ENCODE measurements at regions of chr3 and their contacts with region 1.

Region 1: GRCh38 chr3:59526999-59527398 is 477.2 kb upstream of the CFAP20DC start:
- DNase-seq: no peak
- ATAC-seq: no peak
- H3K4me3 ChIP-seq: no peak overlapping the region
- H3K27ac ChIP-seq: no peak overlapping the region
- H3K4me1 ChIP-seq: no peaks in the 10 kb centered on the region
- H3K27me3 ChIP-seq: no peaks in the 10 kb centered on the region
- CTCF ChIP-seq: no peak

Region 2: DNA sequence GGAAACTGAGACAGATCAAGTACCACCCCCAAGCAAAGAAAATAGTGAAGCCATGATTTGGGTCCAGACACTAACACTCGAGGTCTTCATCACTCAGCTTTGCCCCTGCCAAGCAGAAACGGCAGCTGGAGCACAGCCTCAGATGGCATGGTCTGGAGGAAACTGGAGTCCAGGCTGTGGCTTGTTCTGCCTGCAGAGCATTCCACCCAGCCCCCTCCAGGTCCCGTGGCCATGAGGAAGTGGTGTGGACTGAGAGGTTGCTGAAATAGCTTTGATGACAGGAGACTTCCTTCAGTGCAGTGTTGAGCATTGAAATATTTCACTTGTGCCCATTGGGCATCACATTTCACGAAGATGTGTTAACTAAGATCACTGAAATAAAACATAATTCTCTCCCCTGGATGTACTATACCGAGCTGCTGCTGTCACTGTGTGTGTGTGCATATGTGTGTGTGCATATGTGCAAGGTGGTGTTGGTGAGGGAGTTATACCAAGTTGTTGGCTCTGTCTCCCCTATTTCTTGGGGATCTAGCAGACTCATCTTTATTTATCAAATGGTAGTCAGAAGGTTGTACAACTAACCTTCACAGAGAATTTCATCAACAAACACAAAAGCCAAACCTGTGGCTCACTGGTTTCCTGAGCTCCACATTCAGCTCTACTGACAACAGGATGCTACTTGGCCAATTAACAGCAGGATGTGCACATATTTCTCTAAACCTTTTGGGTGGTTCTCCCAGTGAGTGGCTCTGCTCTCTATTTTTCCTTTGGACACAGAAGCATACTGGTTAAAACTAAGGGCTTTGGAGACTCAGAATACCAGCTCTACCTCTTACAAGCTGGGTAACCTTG is 182.9 kb after region 1 on chr3:
- CTCF ChIA-PET with region 1: no interaction called
- POLR2A ChIA-PET with region 1: no interaction called
- in situ Hi-C with region 1: no loop called
- intact Hi-C with region 1: no loop called
- DNase-seq: no peak
- ATAC-seq: no peak
- H3K4me3 ChIP-seq: no peak overlapping the region
- H3K27ac ChIP-seq: no peak overlapping the region
- H3K4me1 ChIP-seq: no peaks in the 10 kb centered on the region
- H3K27me3 ChIP-seq: no peaks in the 10 kb centered on the region
- CTCF ChIP-seq: no peak

Region 3: DNA sequence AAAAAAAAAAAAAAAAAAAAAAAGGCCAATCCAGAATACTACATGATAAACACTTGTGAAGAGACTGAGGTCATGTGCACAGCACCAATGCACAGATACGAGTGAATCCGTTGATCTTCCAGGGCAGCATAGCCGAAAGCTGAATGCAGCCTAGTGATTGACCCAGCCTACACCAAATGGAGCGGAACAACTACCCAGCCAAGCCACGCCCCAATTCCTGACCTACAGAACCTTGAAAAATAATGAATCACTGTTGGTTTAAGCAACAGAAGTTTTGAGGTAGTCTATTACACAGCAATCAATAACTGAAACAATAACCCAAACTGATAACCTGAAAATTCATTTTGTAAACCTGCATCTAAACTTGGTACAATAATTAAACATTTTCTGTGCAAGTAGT is 1363.2 kb after region 1 on chr3:
- CTCF ChIA-PET with region 1: interaction called, 10 read pairs
- POLR2A ChIA-PET with region 1: no interaction called
- in situ Hi-C with region 1: no loop called
- intact Hi-C with region 1: no loop called
- DNase-seq: no peak
- ATAC-seq: no peak
- H3K4me3 ChIP-seq: no peak overlapping the region
- H3K27ac ChIP-seq: no peak overlapping the region
- H3K4me1 ChIP-seq: no peaks in the 10 kb centered on the region
- H3K27me3 ChIP-seq: no peaks in the 10 kb centered on the region
- CTCF ChIP-seq: no peak